SK-N-SH (cell line): ENCODE measurements at regions of chr2 and their contacts with region 1.

Region 1: GRCh38 chr2:3604991-3605961 is 10.4 kb downstream of the COLEC11 start:
- DNase-seq: peak; percentile 97
- H3K4me3 ChIP-seq: no peak overlapping the region
- H3K27ac ChIP-seq: peak overlapping the region; percentile 56 to 99; a peak in 3 of 4 replicates
- H3K4me1 ChIP-seq: peaks cover 5 to 81% of the 10 kb centered on the region in 2 experiments; a peak in 3 of 4 replicates
- H3K27me3 ChIP-seq: no peaks in the 10 kb centered on the region
- CTCF ChIP-seq: no peak
- EP300 ChIP-seq: peak in 1 of 2 experiments; percentile 33; a peak in 2 of 4 replicates
- RAD21 ChIP-seq: peak; percentile 12; the same call in 1 of the 2 replicates

Region 2: DNA sequence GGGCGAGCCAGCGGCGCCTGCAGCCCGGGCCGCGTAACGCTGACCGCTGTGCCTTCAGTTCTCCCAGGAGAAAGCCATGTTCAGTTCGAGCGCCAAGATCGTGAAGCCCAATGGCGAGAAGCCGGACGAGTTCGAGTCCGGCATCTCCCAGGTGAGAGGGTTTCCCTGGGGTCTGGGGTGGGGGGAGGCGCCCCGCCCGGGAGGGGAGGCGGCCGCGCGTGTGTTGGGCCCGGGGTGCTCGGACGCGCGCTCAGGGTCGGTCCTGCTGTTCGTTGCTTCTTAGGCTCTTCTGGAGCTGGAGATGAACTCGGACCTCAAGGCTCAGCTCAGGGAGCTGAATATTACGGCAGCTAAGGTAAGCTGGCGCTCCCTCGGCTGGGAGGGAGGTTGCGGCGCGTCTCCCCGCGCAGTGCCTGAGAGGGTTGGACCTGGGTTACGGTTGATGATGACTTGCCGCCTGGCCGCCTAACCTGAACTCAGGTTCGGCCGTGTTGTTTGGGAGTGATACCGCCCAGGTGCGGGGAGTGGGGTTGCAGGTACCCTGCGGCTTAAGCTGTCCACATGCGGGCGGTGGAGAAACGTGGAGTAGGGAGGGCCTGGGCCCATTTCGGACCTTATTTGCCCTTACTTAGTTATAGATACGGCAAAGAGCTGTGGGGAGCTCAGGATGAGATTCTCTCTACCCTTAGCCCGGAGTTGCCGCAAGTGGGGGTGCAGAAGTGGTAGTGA is 29.6 kb before region 1 on chr2:
- CTCF ChIA-PET with region 1: interaction called, 4 read pairs
- POLR2A ChIA-PET with region 1: interaction called, 10 read pairs
- DNase-seq: peak; percentile 55
- H3K4me3 ChIP-seq: peak overlapping the region; percentile 86 to 100
- H3K27ac ChIP-seq: peak overlapping the region; percentile 81 to 93
- H3K4me1 ChIP-seq: peaks cover 33 to 40% of the 10 kb centered on the region in 2 experiments; a peak in 3 of 4 replicates
- H3K27me3 ChIP-seq: no peaks in the 10 kb centered on the region
- CTCF ChIP-seq: no peak
- EP300 ChIP-seq: no peak
- RAD21 ChIP-seq: no peak

Region 3: DNA sequence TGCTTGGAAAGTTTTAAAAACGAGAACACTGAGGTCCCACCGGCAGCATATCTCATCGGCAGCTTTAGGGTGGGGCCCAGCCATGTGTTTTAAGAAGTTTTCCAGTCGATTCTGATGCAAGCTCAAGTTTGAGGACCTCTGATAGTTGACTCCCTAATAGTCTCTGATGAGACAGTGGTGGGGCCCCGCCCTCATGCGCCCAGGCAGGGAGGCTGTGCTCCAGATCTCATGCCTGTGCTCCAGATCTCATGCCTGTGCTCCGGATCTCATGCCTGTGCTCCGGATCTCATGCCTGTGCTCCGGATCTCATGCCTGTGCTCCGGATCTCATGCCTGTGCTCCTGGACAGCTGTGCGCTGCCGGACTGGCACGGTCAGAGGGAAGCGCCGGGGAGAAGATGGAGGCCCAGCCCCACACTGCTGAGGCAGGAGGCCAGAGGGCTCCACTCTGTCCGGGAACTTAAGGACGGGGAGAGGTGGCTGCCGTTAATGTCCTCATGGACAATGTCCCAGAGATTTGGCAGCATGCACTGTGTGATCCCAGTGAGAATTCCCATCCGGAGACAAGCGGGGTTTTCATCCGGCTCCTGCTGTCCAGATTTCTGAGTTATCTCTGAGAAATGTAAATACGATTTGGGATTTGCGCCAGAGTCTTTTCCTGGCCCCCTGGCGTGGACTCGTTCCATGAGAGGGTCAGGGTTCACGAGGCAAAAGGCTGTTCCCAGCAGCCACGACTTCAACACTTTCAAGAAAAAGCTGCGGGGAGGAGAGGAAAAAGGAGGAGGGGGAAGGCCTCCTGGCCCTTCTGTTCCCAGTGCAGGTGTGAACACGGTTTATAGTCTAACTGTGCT is 19.8 kb before region 1 on chr2:
- CTCF ChIA-PET with region 1: interaction called, 18 read pairs
- POLR2A ChIA-PET with region 1: interaction called, 20 read pairs
- DNase-seq: peak; percentile 82
- H3K4me3 ChIP-seq: no peak overlapping the region; a peak in 1 of 4 replicates
- H3K27ac ChIP-seq: peak overlapping the region; percentile 71 to 97
- H3K4me1 ChIP-seq: peaks cover 13 to 59% of the 10 kb centered on the region in 2 experiments
- H3K27me3 ChIP-seq: no peaks in the 10 kb centered on the region
- CTCF ChIP-seq: no peak
- EP300 ChIP-seq: peak in 1 of 2 experiments; percentile 57; a peak in 2 of 4 replicates
- RAD21 ChIP-seq: peak; percentile 19; the same call in 1 of the 2 replicates

Region 4: DNA sequence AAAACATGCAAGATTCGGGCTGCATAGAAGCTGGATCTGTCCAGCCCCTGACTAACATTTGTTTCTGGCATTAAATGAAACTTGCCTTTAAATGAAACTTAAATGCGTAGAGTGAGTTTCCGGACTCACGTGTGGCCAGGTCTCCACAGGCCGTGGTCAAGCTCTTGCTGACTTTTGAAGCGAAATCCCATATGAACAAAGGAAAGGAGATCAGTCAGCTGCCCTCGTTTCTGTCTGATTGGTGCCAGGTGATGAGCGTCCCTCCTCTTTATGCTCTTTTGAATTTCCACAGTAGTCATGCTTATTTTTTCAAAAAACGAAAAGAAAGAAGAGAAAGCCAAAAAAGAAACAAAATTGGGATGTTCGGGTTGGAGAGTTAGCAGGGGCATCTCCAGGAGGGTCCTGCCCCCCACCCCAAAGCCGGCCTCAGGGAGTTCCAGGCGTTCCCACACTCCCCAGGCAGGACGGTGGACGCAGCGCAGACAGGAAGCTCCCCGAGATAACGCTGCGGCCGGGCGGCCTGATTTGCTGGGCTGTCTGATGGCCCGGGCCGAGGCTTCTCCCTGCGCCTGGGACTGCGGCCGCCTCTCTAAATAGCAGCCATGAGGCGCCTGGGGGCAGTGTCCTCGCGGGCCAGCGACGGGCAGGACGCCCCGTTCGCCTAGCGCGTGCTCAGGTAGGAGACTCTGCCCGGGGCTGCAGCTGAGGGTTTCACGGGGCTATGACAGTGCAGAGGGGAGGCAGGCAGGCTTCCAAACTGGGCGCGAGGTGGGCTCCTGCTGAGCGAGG is 10.6 kb before region 1 on chr2 and contains the start of gene COLEC11:
- CTCF ChIA-PET with region 1: interaction called, 17 read pairs
- POLR2A ChIA-PET with region 1: interaction called, 39 read pairs
- DNase-seq: peak; percentile 96
- H3K4me3 ChIP-seq: peak within 1 kb of the TSS; percentile 30 to 38; a peak in 3 of 4 replicates
- H3K27ac ChIP-seq: peak within 1 kb of the TSS; percentile 20 to 99; a peak in 3 of 4 replicates
- H3K4me1 ChIP-seq: peaks cover 0 to 39% of the 10 kb centered on the region in 2 experiments; a peak in 2 of 4 replicates
- H3K27me3 ChIP-seq: no peaks in the 10 kb centered on the region
- CTCF ChIP-seq: peak; percentile 38
- EP300 ChIP-seq: no peak; a peak in 2 of 4 replicates
- RAD21 ChIP-seq: peak; percentile 47
- polyA plus RNA-seq, gene COLEC11: 8.7 and 15.2 TPM in 2 replicates